Endothelial cell of umbilical vein (primary cell): ENCODE measurements at regions of chr18 and their contacts with region 1.

Region 1: DNA sequence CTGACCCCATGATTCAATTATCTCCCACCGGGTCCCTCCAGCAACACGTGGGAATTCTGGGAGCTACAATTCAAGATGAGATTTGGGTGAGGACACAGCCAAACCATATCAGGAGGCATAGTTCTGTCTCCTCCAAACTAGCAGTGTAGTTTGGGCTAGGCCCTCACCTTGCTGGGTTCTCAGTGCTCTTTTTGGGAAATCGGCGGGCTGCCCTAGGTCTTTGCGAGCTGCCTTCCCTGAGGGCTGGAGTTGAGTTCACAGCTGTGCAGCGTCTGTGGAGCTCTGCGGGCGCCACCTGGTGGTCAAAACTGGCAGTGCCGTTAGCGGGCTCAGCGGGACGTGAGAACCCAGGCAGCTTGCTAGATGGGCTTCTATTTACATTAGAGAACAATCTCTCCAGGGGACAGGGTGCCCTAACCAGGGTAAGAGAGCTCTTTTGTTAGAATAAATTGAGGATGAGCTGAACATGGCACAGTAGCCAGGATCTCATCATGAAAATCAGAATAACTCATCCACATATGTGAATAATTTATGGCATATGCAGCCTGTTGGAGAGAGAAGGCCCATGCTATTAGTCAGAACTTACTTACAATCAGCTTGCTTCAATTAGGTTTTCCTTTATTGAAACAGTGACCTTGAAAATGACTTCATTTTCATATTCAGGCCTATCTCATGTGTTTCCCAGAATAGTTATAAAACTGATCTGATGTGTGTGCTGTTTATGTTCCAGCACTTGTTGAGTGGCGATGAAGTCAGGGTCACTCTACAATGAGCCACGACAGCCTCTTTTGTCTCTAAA is 27.4 kb upstream of the YES1 start:
- DNase-seq: peak; percentile 87
- H3K4me3 ChIP-seq: no peak overlapping the region
- H3K27ac ChIP-seq: no peak overlapping the region
- H3K4me1 ChIP-seq: peaks cover 25% of the 10 kb centered on the region
- H3K27me3 ChIP-seq: no peaks in the 10 kb centered on the region
- CTCF ChIP-seq: peak; percentile 96 to 98
- POLR2A ChIP-seq: no peak

Region 2: GRCh38 chr18:286515-287310 is 552.7 kb before region 1 on chr18:
- CTCF ChIA-PET with region 1: interaction called, 6 read pairs
- POLR2A ChIA-PET with region 1: no interaction called
- dilution Hi-C with region 1: no loop called
- intact Hi-C with region 1: loop called (anchors 5 kb)
- DNase-seq: peak; percentile 67
- H3K4me3 ChIP-seq: no peak overlapping the region
- H3K27ac ChIP-seq: no peak overlapping the region
- H3K4me1 ChIP-seq: no peaks in the 10 kb centered on the region
- H3K27me3 ChIP-seq: peaks cover 0 to 3% of the 10 kb centered on the region in 2 experiments
- CTCF ChIP-seq: peak; percentile 38 to 39
- POLR2A ChIP-seq: no peak

Region 3: GRCh38 chr18:489244-490023 is 350.0 kb before region 1 on chr18:
- CTCF ChIA-PET with region 1: no interaction called
- POLR2A ChIA-PET with region 1: no interaction called
- dilution Hi-C with region 1: no loop called
- intact Hi-C with region 1: no loop called
- DNase-seq: no peak
- H3K4me3 ChIP-seq: no peak overlapping the region
- H3K27ac ChIP-seq: no peak overlapping the region
- H3K4me1 ChIP-seq: peaks cover 7% of the 10 kb centered on the region
- H3K27me3 ChIP-seq: no peaks in the 10 kb centered on the region
- CTCF ChIP-seq: no peak
- POLR2A ChIP-seq: no peak

Region 4: DNA sequence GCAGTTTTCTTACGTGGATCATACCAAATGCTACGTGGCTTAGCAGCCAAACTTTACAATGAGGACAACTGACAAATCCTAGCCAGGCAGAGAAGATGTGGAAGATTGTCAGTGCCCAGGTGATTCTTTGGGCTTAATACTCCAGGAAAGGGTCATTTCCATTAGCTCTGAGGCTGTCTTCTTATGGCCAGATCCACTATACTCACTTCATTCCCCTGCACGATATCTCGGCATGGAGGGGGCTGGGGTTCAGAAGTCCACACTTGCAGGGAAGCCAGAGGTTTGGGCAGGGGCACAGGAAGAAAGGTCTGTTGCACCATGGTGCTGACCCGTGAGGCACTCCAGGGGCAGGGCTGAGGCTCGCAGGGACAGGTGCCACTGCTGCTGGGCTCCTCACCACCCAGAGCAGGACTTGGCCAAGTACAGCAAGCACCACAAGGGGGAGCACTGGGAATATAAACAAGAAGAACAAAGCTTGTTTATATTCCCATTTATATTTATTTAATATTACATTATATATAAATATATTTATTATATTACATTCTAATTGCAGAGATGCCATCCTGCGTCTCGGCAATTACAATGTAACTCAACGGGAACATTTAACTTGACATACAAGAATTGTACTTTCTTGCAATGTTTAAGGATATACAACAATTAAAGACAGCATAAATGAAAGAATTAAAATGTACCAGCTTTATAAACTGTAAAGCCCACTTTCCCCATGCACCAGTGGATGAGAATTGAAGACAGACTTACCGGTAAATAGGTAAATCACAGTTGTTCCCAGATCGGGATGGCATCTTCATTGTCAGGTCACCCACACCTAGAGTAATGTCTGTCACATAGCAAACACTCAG is 215.4 kb before region 1 on chr18:
- CTCF ChIA-PET with region 1: interaction called, 652 read pairs
- POLR2A ChIA-PET with region 1: no interaction called
- dilution Hi-C with region 1: no loop called
- intact Hi-C with region 1: loop called (anchors 1 kb)
- DNase-seq: peak; percentile 64
- H3K4me3 ChIP-seq: no peak overlapping the region
- H3K27ac ChIP-seq: no peak overlapping the region
- H3K4me1 ChIP-seq: no peaks in the 10 kb centered on the region
- H3K27me3 ChIP-seq: peaks cover 0 to 2% of the 10 kb centered on the region in 2 experiments
- CTCF ChIP-seq: peak; percentile 55 to 78
- POLR2A ChIP-seq: no peak

Region 5: GRCh38 chr18:658001-658946 is 181.1 kb before region 1 on chr18:
- CTCF ChIA-PET with region 1: interaction called, 11 read pairs
- POLR2A ChIA-PET with region 1: no interaction called
- dilution Hi-C with region 1: no loop called
- intact Hi-C with region 1: loop called (anchors 10 kb)
- DNase-seq: peak; percentile 93
- H3K4me3 ChIP-seq: peak overlapping the region; percentile 70 to 88 (median 82)
- H3K27ac ChIP-seq: peak overlapping the region; percentile 46
- H3K4me1 ChIP-seq: peaks cover 10% of the 10 kb centered on the region
- H3K27me3 ChIP-seq: no peaks in the 10 kb centered on the region
- CTCF ChIP-seq: no peak
- POLR2A ChIP-seq: peak; percentile 74

Region 6: DNA sequence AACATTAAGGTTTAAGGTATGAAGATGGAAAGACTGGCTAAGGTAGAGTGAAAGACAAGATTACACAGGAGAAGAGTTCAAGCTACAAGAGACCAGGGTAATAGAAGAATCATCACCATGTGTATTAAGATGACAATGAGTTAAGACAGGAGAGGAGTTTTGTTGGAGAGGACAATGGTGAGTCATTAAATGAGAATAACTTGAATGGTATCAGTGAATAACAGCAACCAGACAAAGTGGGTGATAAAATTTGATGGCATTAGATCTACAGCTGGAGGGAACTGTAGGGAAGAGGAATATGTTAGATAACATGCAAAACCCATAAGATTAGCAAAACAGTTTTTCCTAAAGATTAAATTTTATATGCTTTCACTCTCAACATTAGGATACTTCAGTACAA is 108.2 kb before region 1 on chr18:
- CTCF ChIA-PET with region 1: interaction called, 301 read pairs
- POLR2A ChIA-PET with region 1: no interaction called
- dilution Hi-C with region 1: loop called (anchors 25 kb)
- intact Hi-C with region 1: no loop called
- DNase-seq: no peak
- H3K4me3 ChIP-seq: no peak overlapping the region
- H3K27ac ChIP-seq: no peak overlapping the region
- H3K4me1 ChIP-seq: no peaks in the 10 kb centered on the region
- H3K27me3 ChIP-seq: no peaks in the 10 kb centered on the region
- CTCF ChIP-seq: no peak
- POLR2A ChIP-seq: no peak

Region 7: GRCh38 chr18:812376-813171 is 26.8 kb before region 1 on chr18:
- CTCF ChIA-PET with region 1: interaction called, 18 read pairs
- POLR2A ChIA-PET with region 1: no interaction called
- dilution Hi-C with region 1: no loop called
- intact Hi-C with region 1: no loop called
- DNase-seq: peak; percentile 88
- H3K4me3 ChIP-seq: peak overlapping the region; percentile 80 to 100 (median 99)
- H3K27ac ChIP-seq: peak overlapping the region; percentile 90
- H3K4me1 ChIP-seq: peaks cover 49% of the 10 kb centered on the region
- H3K27me3 ChIP-seq: no peaks in the 10 kb centered on the region
- CTCF ChIP-seq: no peak
- POLR2A ChIP-seq: no peak